Adrenal gland (tissue), 19 donors: ENCODE measurements at regions of chr15 and their contacts with region 1.

Region 1: GRCh38 chr15:99076552-99077308 is 28.1 kb upstream of the SYNM start:
- DNase-seq: peak; percentile 65 to 87 (median 80)
- H3K4me3 ChIP-seq: peak overlapping the region in 2 of 4 donors; percentile 16 to 56
- H3K27ac ChIP-seq: peak overlapping the region in 2 of 5 donors; percentile 27 to 60
- H3K4me1 ChIP-seq: no peaks in the 10 kb centered on the region
- H3K27me3 ChIP-seq: no peaks in the 10 kb centered on the region
- CTCF ChIP-seq: peak; percentile 84 to 92 (median 90)
- POLR2A ChIP-seq: no peak

Region 2: GRCh38 chr15:98442379-98442833 is 634.3 kb before region 1 on chr15:
- intact Hi-C with region 1: loop called in 1 of 2 experiments (anchors 5 kb)
- DNase-seq: peak; percentile 41 to 75 (median 64)
- H3K4me3 ChIP-seq: no peak overlapping the region
- H3K27ac ChIP-seq: no peak overlapping the region
- H3K4me1 ChIP-seq: no peaks in the 10 kb centered on the region
- H3K27me3 ChIP-seq: no peaks in the 10 kb centered on the region
- CTCF ChIP-seq: peak; percentile 65 to 79 (median 76)
- POLR2A ChIP-seq: no peak

Region 3: DNA sequence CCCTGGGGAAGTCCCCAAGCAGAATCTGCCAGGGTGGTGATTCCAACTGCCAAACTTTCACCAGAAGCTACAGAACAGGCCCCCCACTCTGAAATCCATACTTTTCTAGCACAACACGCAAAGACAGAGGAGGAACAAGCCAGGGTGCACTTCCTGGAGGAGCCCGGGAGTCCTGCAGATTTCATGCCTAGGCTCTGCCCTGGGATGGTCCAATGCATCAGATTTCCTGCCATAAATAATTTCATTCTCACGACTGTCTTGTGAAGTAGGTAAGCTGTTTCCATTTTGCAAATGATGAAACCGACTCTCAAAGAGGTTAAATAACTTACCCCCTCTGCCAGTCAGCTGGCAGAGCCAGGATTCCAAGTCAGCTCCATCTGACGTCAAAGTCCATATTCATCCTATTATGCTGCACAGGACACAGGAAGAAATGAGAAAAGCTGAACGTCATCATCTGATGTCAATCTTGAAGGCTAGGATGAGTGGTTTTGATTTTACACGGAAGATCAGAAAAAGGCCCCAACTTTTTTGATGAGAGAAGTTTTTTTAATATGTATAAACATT is 563.2 kb before region 1 on chr15:
- intact Hi-C with region 1: loop called in 1 of 2 experiments (anchors 5 kb)
- DNase-seq: no peak
- H3K4me3 ChIP-seq: no peak overlapping the region
- H3K27ac ChIP-seq: no peak overlapping the region
- H3K4me1 ChIP-seq: no peaks in the 10 kb centered on the region
- H3K27me3 ChIP-seq: no peaks in the 10 kb centered on the region
- CTCF ChIP-seq: no peak
- POLR2A ChIP-seq: no peak

Region 4: DNA sequence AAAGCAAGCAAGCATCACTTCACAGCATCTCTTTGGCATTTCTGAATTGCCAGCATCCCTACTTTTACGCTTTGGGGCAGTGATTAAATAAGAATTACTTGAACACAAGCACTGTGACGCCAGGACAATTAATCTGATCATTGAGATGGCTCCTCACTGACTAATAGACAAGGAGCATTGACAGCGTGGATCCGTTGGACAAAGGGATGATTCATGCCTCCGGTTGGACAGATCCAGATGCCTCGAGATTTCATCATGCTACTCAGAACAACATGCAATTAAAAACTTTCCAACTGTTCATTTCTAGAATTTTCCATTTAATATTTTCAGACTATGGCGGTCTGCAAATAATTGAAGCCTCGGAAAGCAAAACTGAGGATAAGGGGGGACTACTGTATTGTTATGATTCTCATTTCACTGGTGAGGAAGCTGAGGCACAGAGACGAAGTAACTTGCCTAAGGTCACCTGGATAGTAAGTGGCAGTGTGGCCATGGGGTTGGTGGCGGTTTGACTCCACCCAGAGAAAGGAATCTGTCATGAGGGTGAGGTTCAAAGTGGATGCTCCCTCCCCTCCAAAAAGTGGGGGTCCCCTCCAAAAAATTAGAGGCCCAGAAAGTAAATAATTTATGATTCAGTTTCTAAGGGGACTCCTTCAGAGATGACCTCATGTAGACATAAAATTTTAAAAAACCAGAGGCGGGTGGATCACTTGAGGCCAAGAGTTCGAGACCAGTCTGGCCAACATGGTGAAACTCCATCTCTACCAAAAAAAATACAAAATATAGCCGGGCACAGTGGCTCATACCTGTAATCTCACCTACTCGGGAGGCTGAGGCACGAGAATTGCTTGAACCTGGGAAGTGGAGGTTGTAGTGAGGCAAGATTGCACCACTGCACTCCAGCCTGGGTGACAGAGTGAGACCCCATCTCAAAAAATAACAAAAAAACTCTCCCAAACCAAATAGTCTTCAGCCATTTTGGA is 56.9 kb before region 1 on chr15:
- intact Hi-C with region 1: no loop called
- DNase-seq: peak in 2 of 7 donors; percentile 21 to 23
- H3K4me3 ChIP-seq: no peak overlapping the region
- H3K27ac ChIP-seq: no peak overlapping the region
- H3K4me1 ChIP-seq: peaks cover 0 to 8% of the 10 kb centered on the region in 2 donors
- H3K27me3 ChIP-seq: no peaks in the 10 kb centered on the region
- CTCF ChIP-seq: no peak
- POLR2A ChIP-seq: no peak